Activated naive CD8-positive, alpha-beta T cell treated with anti-CD3 and anti-CD28 coated beads, Interleukin-2, amount 10 ng/mL, durations not matched to agents 7 days and 5 days (primary cell): ENCODE measurements at regions of chr15 and their contacts with region 1.

Region 1: DNA sequence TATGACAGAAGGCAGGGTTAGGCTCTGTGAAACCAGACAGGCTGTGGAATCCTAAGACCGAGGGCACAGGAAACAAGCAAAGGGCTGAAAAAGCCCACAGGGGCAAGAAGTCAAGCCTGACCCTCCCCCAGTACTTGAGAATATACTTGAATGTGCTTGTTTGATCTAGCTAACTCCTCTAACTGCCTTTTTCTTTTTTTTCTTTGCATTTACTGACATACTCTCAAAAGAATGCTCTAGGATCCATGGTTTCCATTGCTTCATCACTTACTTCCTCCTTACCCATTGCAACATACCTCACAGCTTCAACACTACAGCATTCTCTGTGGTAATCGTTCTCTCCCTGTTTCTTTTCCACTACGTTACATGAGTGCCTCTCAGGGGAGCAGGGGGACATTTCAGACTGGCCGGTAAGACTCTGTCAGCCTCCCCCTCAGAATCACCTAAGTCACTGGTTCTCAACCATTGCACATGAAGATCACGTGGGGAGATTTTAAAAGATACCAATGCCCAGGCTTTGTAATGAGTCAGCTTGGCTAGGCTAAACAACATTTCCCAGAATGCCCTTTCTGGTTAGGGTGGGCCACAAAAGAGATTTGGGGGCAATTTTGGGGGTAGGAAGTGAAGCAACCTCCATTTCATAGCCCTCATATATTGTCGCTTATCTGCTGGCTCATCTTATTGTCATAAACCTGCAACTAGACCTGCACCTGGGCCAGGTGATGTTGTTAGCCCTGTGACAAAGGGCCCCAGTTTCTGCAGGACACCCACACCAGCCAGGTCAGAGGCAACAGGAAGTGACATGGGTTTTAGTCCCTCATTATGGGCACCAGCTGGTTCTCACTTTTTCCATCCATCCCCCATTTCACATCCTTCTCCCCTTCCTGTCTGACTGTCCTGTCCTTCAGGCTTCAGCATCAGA is 24.6 kb upstream of the RSL24D1 start:
- DNase-seq: peak; percentile 49
- ATAC-seq: peak; percentile 62
- H3K4me3 Mint-ChIP-seq: peak overlapping the region; percentile 78
- H3K27ac Mint-ChIP-seq: peak overlapping the region; percentile 97
- H3K4me1 Mint-ChIP-seq: peaks cover 67% of the 10 kb centered on the region
- H3K27me3 Mint-ChIP-seq: no peaks in the 10 kb centered on the region

Region 2: DNA sequence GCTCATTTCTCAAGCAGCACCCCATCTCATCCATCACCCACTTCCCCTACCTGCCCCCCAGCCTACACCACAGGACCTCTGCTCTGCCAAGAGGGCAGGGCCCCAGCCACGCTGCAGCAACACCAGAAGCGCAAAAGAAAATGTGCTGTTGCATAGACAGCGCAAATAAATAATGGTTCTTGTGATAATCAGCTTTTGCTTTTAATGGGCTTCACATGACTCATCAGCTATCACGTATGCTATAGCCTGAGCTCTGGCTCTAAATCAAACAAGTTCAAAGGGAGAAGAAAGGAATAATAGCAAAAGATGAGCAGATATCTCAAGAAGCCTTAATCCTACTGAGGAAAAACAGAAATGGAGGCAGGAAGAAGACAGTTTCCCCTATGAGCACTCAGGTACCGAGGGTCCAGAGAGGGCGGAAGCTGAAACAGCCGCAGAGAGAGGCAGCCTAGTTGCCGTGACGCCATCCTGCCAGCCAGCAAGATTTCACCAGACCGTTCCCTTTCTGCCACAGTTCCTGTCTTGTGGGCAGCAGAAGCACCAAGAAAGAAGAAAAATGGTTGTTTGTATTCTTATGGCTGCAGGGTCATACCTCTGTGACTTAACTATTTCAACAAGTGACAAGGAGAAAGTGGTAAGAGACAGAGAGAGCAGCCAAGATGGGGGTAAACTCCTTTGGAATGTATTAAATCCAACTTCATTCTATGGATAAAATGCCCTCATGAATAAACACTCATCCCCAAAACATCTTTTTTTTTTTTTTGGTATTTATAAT is 46.2 kb after region 1 on chr15:
- POLR2A ChIA-PET with region 1: interaction called, 15 read pairs
- DNase-seq: peak; percentile 62
- ATAC-seq: peak; percentile 93
- H3K4me3 Mint-ChIP-seq: peak overlapping the region; percentile 77
- H3K27ac Mint-ChIP-seq: peak overlapping the region; percentile 97
- H3K4me1 Mint-ChIP-seq: peaks cover 61% of the 10 kb centered on the region
- H3K27me3 Mint-ChIP-seq: no peaks in the 10 kb centered on the region

Region 3: DNA sequence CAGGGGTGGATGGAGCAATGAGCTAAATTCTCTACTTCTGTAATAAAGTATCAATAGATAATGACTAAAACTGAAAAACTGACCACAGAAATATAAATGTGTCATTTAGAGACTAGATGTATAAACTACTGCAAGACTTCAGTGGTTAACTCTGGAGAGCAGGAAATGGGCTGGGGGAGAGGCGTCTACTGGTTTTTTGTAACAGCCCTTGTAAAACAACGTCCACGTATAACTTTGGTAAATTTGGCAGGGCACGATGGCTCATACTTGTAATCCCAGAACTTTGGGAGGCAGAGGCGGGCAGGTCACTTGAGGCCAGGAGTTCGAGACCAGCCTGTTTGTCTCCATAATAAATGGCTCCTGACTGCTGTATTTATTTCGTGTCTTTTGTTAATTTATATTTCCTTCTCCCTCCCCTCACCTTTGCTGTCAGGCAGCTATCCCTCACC is 55.8 kb after region 1 on chr15:
- POLR2A ChIA-PET with region 1: interaction called, 14 read pairs
- DNase-seq: peak; percentile 50
- ATAC-seq: peak; percentile 72
- H3K4me3 Mint-ChIP-seq: peak overlapping the region; percentile 79
- H3K27ac Mint-ChIP-seq: peak overlapping the region; percentile 94
- H3K4me1 Mint-ChIP-seq: peaks cover 71% of the 10 kb centered on the region
- H3K27me3 Mint-ChIP-seq: no peaks in the 10 kb centered on the region

Region 4: GRCh38 chr15:55327387-55327786 is 106.0 kb after region 1 on chr15:
- POLR2A ChIA-PET with region 1: no interaction called
- DNase-seq: no peak
- ATAC-seq: no peak
- H3K4me3 Mint-ChIP-seq: no peak overlapping the region
- H3K27ac Mint-ChIP-seq: no peak overlapping the region
- H3K4me1 Mint-ChIP-seq: peaks cover 5% of the 10 kb centered on the region
- H3K27me3 Mint-ChIP-seq: no peaks in the 10 kb centered on the region